Ascending aorta (tissue), 2 donors: ENCODE measurements at regions of chr1 and their contacts with region 1.

Region 1: DNA sequence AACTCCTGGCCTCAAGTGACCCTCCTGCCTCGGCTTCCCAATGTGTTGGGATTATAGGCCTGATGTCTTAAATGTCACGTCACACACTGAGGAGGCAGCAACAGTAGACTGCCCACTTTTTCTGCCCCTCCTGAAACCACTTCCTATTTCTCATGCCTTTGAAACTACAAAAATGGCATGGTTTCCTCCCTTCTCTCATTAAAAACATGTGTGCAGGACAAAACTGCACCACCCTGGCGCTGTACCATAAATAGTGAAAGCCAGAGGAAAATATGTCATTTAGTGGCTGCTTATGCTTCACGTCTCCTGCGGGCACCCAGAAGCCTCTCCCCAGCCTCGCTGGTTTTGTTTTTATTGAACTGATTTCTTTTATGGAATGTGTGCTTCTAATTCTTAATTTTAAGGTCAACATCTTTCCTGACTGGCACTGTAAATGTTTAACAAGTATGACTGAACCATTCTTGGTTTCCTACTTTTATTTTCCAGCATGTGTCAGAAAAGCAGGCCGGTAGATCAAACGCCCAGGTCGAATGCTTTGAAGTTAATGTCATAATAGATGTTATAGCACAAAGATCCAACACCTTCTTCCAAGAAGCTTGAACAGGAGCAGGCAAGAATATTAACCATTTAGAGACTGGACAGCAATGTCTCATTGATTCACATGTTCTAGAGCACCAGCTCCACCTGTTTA is 59.6 kb upstream of the C1orf87 start:
- DNase-seq: peak in 1 of 2 donors; percentile 85
- H3K4me3 ChIP-seq: peak overlapping the region in 1 of 2 donors; percentile 33
- H3K27ac ChIP-seq: peak overlapping the region; percentile 70 to 74
- H3K4me1 ChIP-seq: peaks cover 0 to 6% of the 10 kb centered on the region in 2 donors
- H3K27me3 ChIP-seq: no peaks in the 10 kb centered on the region
- CTCF ChIP-seq: no peak

Region 2: DNA sequence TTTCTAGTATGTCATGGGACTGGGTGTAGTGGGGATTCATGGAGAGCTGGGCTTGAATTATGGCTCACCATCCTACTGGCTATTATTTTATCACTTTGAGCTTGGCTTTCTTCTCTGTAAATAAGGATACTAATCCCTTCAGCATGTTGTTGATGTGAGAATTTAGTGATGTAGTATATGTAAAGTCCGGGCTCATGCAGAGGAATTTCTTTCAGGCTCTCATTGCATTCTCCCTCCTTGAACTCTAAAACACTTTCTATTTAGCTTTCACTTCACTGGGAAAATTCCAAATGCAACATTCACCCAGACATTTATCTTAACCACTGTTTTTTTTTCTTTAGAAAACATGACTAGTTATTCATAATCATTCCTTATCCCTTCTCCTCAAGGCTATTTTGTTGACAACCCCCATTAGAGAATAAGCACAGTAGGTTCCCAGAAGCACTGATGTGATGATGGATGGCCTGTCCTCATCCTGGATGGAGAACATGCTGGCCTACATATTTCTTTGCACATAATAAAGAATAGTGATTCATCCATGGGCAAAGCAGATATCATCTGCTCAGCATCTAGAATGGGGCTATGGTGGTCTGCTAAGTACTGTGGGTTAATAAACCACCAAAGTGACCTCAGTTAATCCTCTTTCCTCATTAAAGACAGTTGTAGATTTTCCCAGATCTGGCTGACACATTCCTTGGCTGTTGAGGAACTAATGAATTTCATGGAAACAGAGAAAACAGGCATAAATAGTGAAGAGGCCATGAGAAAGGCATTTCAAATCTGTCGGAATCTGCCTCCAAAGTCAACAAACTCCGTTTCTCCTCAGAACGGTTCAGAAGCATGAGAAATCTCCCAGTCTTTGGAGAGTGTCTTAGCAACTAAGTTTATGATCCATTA is 138.6 kb before region 1 on chr1:
- intact Hi-C with region 1: loop called (anchors 5 kb)
- DNase-seq: peak in 1 of 2 donors; percentile 87
- H3K4me3 ChIP-seq: no peak overlapping the region
- H3K27ac ChIP-seq: peak overlapping the region; percentile 76 to 79
- H3K4me1 ChIP-seq: peaks cover 0 to 26% of the 10 kb centered on the region in 2 donors
- H3K27me3 ChIP-seq: no peaks in the 10 kb centered on the region
- CTCF ChIP-seq: no peak

Region 3: DNA sequence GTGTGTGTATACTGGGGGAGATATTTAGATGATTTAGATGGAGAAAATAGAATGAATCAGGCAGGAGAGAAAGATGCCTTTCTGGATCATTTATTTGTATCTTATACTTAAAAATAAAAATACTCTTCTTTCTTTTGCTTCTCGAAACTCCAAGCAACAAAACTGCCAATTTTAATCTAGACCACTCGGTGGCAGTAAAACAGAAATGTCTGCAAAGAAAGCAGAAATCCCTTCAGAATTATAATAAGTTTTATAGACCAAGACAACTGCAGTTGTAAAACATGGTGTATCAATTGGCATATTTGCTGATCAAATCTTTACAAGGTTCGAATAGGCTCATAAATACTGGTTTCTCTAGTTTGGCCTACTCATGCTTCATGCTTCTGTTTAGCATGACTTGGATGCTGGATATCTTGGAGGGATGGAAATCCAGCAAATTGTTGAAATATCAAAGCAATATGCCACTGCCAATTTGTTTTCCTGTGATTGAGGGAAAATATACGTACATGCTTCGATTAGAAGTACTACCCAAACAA is 44.4 kb before region 1 on chr1:
- intact Hi-C with region 1: no loop called
- DNase-seq: no peak
- H3K4me3 ChIP-seq: no peak overlapping the region
- H3K27ac ChIP-seq: no peak overlapping the region
- H3K4me1 ChIP-seq: no peaks in the 10 kb centered on the region
- H3K27me3 ChIP-seq: no peaks in the 10 kb centered on the region
- CTCF ChIP-seq: peak in 2 of 3 experiments; percentile 7 to 12